ENCODE measurements at regions of chr12 and their contacts with region 1.

Region 1: GRCh38 chr12:6613776-6614512 is 6.8 kb upstream of the CHD4 start:
- DNase-seq: peak; percentile 99
- ATAC-seq: peak; percentile 83
- H3K4me3 ChIP-seq: no peak overlapping the region
- H3K27ac ChIP-seq: peak overlapping the region; percentile 88
- H3K4me1 ChIP-seq: peaks cover 23% of the 10 kb centered on the region
- H3K27me3 ChIP-seq: no peaks in the 10 kb centered on the region
- CTCF ChIP-seq: 0 out of 2 replicates have a peak, but pooled peaks have one; percentile 8
- POLR2A ChIP-seq: no peak
- RAD21 ChIP-seq: no peak

Region 2: GRCh38 chr12:6465467-6466183 is 148.3 kb before region 1 on chr12:
- CTCF ChIA-PET with region 1: no interaction called
- POLR2A ChIA-PET with region 1: no interaction called
- dilution Hi-C with region 1: no loop called
- in situ Hi-C with region 1: no loop called
- intact Hi-C with region 1: no loop called
- DNase-seq: peak; percentile 77
- ATAC-seq: peak; percentile 72
- H3K4me3 ChIP-seq: no peak overlapping the region
- H3K27ac ChIP-seq: no peak overlapping the region
- H3K4me1 ChIP-seq: peaks cover 4% of the 10 kb centered on the region
- H3K27me3 ChIP-seq: no peaks in the 10 kb centered on the region
- CTCF ChIP-seq: peak; percentile 93
- POLR2A ChIP-seq: no peak
- RAD21 ChIP-seq: peak; percentile 96

Region 3: GRCh38 chr12:6662906-6663742 is 49.2 kb after region 1 on chr12 and contains the start of gene ING4:
- CTCF ChIA-PET with region 1: interaction called, 3 read pairs
- POLR2A ChIA-PET with region 1: no interaction called
- dilution Hi-C with region 1: no loop called
- in situ Hi-C with region 1: no loop called
- intact Hi-C with region 1: loop called (anchors 5 kb)
- DNase-seq: peak; percentile 99
- ATAC-seq: peak; percentile 99
- H3K4me3 ChIP-seq: peak within 1 kb of the TSS; percentile 73
- H3K27ac ChIP-seq: peak within 1 kb of the TSS; percentile 71
- H3K4me1 ChIP-seq: no peaks in the 10 kb centered on the region
- H3K27me3 ChIP-seq: no peaks in the 10 kb centered on the region
- CTCF ChIP-seq: no peak
- POLR2A ChIP-seq: peak; percentile 80
- RAD21 ChIP-seq: no peak
- total RNA-seq, gene ING4: 22.0 and 25.3 TPM in 2 replicates

Region 4: DNA sequence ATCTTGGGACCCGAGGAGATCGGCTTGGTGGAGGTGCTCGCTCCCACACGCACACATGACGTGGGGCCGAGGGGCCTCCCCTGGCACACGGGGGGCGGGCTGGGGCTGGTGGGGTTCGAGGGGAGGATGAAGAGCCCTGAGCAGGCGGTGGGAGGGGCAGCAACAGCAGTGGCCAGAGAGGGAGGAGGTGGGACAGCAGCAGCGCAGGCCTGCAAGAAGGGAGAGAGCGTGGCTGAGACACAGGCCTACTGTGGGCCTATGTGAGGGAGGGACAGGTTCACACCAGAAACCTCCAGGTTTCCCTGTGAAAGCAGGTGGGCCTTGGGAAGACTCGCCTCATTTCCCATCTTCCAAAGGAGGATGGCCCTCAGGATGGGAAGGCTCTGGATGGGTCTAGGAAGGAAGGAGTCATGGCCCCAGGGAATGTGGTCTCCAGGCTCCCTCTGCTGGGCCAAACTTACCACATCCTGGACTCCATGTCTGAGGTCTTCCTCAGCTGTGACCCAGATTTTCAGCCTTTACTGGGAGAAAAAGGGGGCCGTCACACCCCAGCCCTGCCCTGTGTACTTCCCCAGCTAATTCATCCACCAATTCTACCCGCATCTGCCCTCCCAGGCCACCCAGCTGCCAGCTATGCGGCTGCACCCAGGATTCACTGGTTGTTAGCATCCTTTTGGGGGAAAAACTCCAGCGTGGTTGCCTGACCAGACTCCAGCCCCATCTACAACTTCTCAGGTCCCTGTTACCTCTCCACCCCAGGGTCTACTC is 83.8 kb after region 1 on chr12:
- CTCF ChIA-PET with region 1: no interaction called
- POLR2A ChIA-PET with region 1: no interaction called
- dilution Hi-C with region 1: no loop called
- in situ Hi-C with region 1: no loop called
- intact Hi-C with region 1: loop called (anchors 1 kb)
- DNase-seq: peak; percentile 64
- ATAC-seq: peak; percentile 60
- H3K4me3 ChIP-seq: no peak overlapping the region
- H3K27ac ChIP-seq: no peak overlapping the region
- H3K4me1 ChIP-seq: peaks cover 4% of the 10 kb centered on the region
- H3K27me3 ChIP-seq: no peaks in the 10 kb centered on the region
- CTCF ChIP-seq: peak; percentile 74
- POLR2A ChIP-seq: no peak
- RAD21 ChIP-seq: peak; percentile 86

Region 5: DNA sequence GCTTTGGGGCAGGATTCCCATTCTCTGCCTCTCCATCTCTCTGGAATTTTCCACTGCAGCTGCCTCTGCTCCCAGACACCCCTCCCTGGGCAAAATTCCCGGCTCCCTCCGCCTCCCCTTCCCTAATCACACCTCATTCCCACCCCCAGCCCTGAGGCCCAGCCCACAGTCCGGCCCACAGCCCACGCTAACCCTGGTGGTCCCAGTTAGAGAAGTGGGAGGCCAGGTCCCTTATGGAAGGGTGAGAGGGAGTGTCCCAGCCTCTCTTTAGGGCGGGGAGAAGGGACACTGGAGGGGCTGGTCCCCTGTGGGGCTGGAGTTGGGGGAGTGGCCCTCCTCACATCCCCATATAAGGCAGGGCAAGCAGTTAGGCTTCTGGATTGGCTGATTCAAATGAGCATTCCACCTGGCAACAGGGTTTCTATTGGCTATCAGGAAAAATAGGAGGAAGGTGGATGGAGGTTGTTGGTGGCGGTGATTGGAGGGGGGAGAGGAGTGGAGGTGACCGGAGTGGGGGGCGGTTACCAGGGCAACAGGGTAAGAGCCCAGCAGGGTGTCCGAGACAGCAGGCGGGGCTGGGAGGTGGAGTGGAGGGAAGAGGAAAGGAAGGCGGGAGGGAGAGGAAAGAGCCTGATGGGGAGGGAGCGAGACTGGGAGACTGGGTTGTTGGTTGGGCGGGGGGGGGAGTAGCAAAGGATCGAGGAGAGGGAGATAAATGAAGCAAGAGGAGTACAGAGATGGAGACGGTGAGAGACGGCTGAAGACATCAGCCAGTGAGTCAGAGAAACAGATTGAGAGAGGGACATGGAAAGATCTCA is 150.3 kb after region 1 on chr12:
- CTCF ChIA-PET with region 1: no interaction called
- POLR2A ChIA-PET with region 1: interaction called, 3 read pairs
- dilution Hi-C with region 1: no loop called
- in situ Hi-C with region 1: no loop called
- intact Hi-C with region 1: loop called (anchors 10 kb)
- DNase-seq: peak; percentile 99
- ATAC-seq: peak; percentile 82
- H3K4me3 ChIP-seq: peak overlapping the region; percentile 12; the same call in 1 of the 2 replicates
- H3K27ac ChIP-seq: peak overlapping the region; percentile 90
- H3K4me1 ChIP-seq: peaks cover 21% of the 10 kb centered on the region
- H3K27me3 ChIP-seq: no peaks in the 10 kb centered on the region
- CTCF ChIP-seq: no peak
- POLR2A ChIP-seq: no peak
- RAD21 ChIP-seq: no peak